Pancreas (tissue), 10 donors: ENCODE measurements at regions of chr18 and their contacts with region 1.

Region 1: GRCh38 chr18:58321986-58322385 is 278.0 kb downstream of the NEDD4L start:
- DNase-seq: peak; percentile 54 to 74 (median 62)
- ATAC-seq: peak; percentile 86 to 97 (median 96)
- H3K4me3 ChIP-seq: no peak overlapping the region
- H3K27ac ChIP-seq: peak overlapping the region in 3 of 4 donors; percentile 13 to 63 (median 52)
- H3K4me1 ChIP-seq: peaks cover 6 to 12% (median 7%) of the 10 kb centered on the region in 3 donors
- H3K27me3 ChIP-seq: no peaks in the 10 kb centered on the region
- CTCF ChIP-seq: peak in 3 of 4 donors; percentile 23 to 39 (median 30)

Region 2: GRCh38 chr18:58180738-58181353 is 141.1 kb before region 1 on chr18:
- intact Hi-C with region 1: loop called in 1 of 3 experiments (anchors 10 kb)
- DNase-seq: peak in 2 of 6 donors; percentile 35 to 63
- ATAC-seq: peak in 3 of 4 donors; percentile 54 to 73 (median 66)
- H3K4me3 ChIP-seq: no peak overlapping the region
- H3K27ac ChIP-seq: no peak overlapping the region
- H3K4me1 ChIP-seq: peaks cover 15 to 41% (median 36%) of the 10 kb centered on the region in 3 donors
- H3K27me3 ChIP-seq: no peaks in the 10 kb centered on the region
- CTCF ChIP-seq: peak; percentile 80 to 87 (median 82)

Region 3: GRCh38 chr18:58386780-58387179 is 64.8 kb after region 1 on chr18:
- intact Hi-C with region 1: loop called in 1 of 3 experiments (anchors 10 kb)
- DNase-seq: peak in 1 of 6 donors; percentile 4
- ATAC-seq: no peak
- H3K4me3 ChIP-seq: no peak overlapping the region
- H3K27ac ChIP-seq: no peak overlapping the region
- H3K4me1 ChIP-seq: no peaks in the 10 kb centered on the region
- H3K27me3 ChIP-seq: no peaks in the 10 kb centered on the region
- CTCF ChIP-seq: no peak